ENCODE measurements at regions of chr22 and their contacts with region 1.

Region 1: GRCh38 chr22:35582861-35583670 is 34.1 kb downstream of the MB start:
- DNase-seq: peak; percentile 47
- ATAC-seq: peak; percentile 86
- H3K4me3 Mint-ChIP-seq: no peak overlapping the region
- H3K27ac Mint-ChIP-seq: no peak overlapping the region
- H3K4me1 Mint-ChIP-seq: peaks cover 4% of the 10 kb centered on the region
- H3K27me3 Mint-ChIP-seq: no peaks in the 10 kb centered on the region
- CTCF ChIP-seq: peak; percentile 45

Region 2: DNA sequence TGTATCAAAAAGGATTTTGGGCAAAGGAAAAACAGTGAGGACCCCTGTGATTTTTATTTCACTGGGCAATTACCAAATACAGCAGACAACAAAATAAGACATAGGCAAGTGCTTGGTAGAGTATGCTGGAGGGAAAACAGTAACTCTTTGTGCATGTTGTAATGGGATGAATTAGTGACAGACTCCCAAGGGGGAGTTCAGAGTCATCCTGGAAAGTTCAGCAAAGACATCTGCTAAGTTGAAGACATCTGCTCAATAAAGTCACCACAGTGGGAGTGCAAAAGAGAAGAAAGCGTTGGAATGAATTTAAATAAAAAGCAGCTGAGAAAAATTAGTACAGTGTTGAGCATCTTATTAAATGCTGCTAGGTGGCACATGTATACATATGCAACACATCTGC is 896.0 kb before region 1 on chr22:
- CTCF ChIA-PET with region 1: no interaction called
- POLR2A ChIA-PET with region 1: no interaction called
- intact Hi-C with region 1: no loop called
- DNase-seq: no peak
- ATAC-seq: no peak
- H3K4me3 Mint-ChIP-seq: no peak overlapping the region
- H3K27ac Mint-ChIP-seq: no peak overlapping the region
- H3K4me1 Mint-ChIP-seq: no peaks in the 10 kb centered on the region
- H3K27me3 Mint-ChIP-seq: no peaks in the 10 kb centered on the region
- CTCF ChIP-seq: no peak

Region 3: DNA sequence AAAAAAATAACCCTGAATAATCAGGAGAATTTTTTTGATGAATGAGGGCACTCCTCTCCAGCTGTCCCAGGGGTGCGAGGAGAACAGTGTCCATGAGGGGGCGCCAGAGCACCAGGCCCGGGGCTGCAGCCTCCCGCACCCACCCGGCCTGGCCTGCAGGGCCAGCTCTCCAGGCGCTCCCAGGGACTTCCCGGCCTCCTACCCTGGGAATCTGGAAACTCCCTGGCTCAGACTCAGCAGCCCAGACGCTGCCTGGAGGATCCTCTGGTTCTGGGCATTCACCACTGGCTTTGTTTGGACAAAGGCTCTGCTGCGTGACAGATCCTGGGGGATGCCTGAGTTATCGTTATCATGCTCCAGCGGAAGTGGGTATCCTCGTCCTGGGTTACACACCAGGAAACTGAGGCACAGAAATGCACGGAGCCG is 152.2 kb before region 1 on chr22:
- CTCF ChIA-PET with region 1: interaction called, 22 read pairs
- POLR2A ChIA-PET with region 1: no interaction called
- intact Hi-C with region 1: loop called (anchors 1 kb)
- DNase-seq: peak; percentile 58
- ATAC-seq: peak; percentile 83
- H3K4me3 Mint-ChIP-seq: no peak overlapping the region
- H3K27ac Mint-ChIP-seq: no peak overlapping the region
- H3K4me1 Mint-ChIP-seq: peaks cover 4% of the 10 kb centered on the region
- H3K27me3 Mint-ChIP-seq: no peaks in the 10 kb centered on the region
- CTCF ChIP-seq: no peak

Region 4: DNA sequence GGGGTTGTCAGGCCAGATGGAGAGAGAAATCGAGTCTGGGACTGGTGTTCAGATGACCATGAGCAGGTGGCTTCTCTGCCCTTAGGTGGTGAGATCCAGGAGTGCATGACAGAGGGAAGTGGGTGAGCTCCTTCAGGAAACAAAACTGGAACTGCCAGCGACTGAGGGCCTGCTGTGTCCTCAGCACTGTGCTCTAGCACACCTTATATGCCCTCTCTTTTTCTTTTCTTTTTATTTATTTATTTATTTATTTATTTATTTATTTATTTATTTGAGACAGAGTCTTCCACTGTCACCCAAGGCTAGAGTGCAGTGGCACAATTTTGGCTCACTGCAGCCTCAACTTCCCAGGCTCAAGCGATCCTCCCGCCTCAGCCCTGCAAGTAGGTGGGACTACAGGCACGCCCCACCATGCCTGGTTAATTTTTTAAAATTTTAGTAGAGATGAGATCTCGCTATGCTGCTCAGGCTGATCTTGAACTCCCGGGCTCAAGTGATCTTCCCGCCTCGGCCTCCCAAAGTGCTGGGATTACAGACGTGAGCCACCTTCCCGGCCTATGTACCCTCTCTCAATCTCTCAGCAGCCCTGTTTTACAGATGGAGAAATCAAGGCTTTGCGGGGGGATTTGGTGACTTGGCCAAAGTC is 57.3 kb before region 1 on chr22:
- CTCF ChIA-PET with region 1: no interaction called
- POLR2A ChIA-PET with region 1: no interaction called
- intact Hi-C with region 1: no loop called
- DNase-seq: no peak
- ATAC-seq: no peak
- H3K4me3 Mint-ChIP-seq: no peak overlapping the region
- H3K27ac Mint-ChIP-seq: no peak overlapping the region
- H3K4me1 Mint-ChIP-seq: peaks cover 17% of the 10 kb centered on the region
- H3K27me3 Mint-ChIP-seq: peaks cover 13% of the 10 kb centered on the region
- CTCF ChIP-seq: no peak

Region 5: DNA sequence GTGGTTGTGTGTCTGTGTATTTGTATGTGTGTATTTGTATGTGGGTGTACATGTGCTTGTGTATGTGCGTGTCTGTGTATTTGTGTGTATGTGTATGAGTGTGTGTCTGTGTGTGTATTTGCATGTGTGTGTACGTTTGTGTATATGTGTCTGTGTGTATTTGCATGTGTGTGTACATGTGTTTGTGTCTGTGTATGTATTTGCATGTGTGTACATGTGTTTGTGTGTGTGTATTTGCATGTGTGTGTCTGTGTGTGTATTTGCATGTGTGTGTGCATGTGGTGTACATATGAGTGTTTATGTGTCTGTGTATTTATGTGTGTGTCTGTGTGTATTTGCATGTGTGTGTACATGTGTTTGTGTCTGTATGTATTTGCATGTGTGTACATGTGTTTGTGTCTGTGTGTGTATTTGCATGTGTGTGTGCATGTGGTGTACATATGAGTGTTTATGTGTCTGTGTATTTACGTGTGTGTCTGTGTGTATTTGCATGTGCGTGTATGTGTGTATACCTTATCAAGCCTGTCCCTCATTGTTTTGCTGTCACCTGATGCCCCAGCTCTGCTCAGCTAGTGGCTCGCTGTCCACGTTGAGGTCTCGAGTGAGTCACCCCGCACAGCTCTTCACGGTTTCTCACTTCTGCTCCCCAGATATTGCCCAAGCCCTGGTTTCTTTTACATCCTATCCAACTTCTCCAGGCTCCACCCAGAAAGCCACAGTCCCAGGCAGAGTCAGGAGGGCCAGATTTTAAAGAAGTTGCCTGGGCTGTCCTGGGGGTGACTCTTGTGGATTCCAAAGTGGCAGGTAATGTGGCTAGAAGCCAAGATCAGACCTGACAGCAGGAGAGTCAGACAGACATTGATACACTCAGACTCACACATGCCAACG is 18.9 kb after region 1 on chr22:
- CTCF ChIA-PET with region 1: no interaction called
- POLR2A ChIA-PET with region 1: no interaction called
- intact Hi-C with region 1: no loop called
- DNase-seq: no peak
- ATAC-seq: no peak
- H3K4me3 Mint-ChIP-seq: no peak overlapping the region
- H3K27ac Mint-ChIP-seq: no peak overlapping the region
- H3K4me1 Mint-ChIP-seq: no peaks in the 10 kb centered on the region
- H3K27me3 Mint-ChIP-seq: peaks cover 16% of the 10 kb centered on the region
- CTCF ChIP-seq: no peak

Region 6: GRCh38 chr22:35622191-35622913 is 39.3 kb after region 1 on chr22:
- CTCF ChIA-PET with region 1: no interaction called
- POLR2A ChIA-PET with region 1: no interaction called
- intact Hi-C with region 1: loop called (anchors 5 kb)
- DNase-seq: no peak
- ATAC-seq: no peak
- H3K4me3 Mint-ChIP-seq: no peak overlapping the region
- H3K27ac Mint-ChIP-seq: no peak overlapping the region
- H3K4me1 Mint-ChIP-seq: peaks cover 6% of the 10 kb centered on the region
- H3K27me3 Mint-ChIP-seq: peaks cover 34% of the 10 kb centered on the region
- CTCF ChIP-seq: no peak

Measured in activated B cell treated with CpG ODN at 0.5 μM for 24 hours (primary cell).